Ascending aorta (tissue), 2 donors: ENCODE measurements at regions of chr1 and their contacts with region 1.

Region 1: GRCh38 chr1:10430216-10431069 is at the start of gene CENPS:
- DNase-seq: peak; percentile 61 to 95
- H3K4me3 ChIP-seq: peak within 1 kb of the TSS; percentile 84 to 97
- H3K27ac ChIP-seq: peak within 1 kb of the TSS; percentile 65 to 71
- H3K4me1 ChIP-seq: peaks cover 5 to 12% of the 10 kb centered on the region in 2 donors
- H3K27me3 ChIP-seq: no peaks in the 10 kb centered on the region
- CTCF ChIP-seq: peak; percentile 96 to 100 (median 97)
- total RNA-seq, gene CENPS: not detected

Region 2: GRCh38 chr1:9874959-9875635 is 555.3 kb before region 1 on chr1:
- intact Hi-C with region 1: loop called (anchors 5 kb)
- DNase-seq: peak; percentile 15 to 79
- H3K4me3 ChIP-seq: peak overlapping the region in 1 of 2 donors; percentile 59
- H3K27ac ChIP-seq: peak overlapping the region; percentile 17 to 67
- H3K4me1 ChIP-seq: peaks cover 5 to 14% of the 10 kb centered on the region in 2 donors
- H3K27me3 ChIP-seq: no peaks in the 10 kb centered on the region
- CTCF ChIP-seq: peak; percentile 85 to 97 (median 96)

Region 3: DNA sequence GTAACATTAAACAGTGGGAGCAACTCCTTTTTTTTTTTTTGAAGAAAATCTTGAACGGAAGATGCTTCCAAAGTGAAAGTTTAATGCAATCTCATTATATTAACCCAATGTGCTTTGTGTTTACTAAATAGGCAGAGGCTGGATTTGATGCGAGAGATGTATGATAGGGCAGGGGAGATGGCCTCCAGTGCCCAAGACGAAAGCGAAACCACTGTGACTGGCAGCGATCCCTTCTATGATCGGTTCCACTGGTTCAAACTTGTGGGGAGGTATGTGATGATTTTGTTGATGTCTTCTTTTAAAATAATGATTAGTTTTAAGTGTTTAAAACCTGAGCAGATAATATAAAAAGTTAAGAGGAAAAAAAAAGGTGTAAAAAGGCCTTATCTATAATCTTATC is 105.8 kb before region 1 on chr1:
- intact Hi-C with region 1: no loop called
- DNase-seq: no peak
- H3K4me3 ChIP-seq: no peak overlapping the region
- H3K27ac ChIP-seq: no peak overlapping the region
- H3K4me1 ChIP-seq: no peaks in the 10 kb centered on the region
- H3K27me3 ChIP-seq: no peaks in the 10 kb centered on the region
- CTCF ChIP-seq: no peak

Region 4: DNA sequence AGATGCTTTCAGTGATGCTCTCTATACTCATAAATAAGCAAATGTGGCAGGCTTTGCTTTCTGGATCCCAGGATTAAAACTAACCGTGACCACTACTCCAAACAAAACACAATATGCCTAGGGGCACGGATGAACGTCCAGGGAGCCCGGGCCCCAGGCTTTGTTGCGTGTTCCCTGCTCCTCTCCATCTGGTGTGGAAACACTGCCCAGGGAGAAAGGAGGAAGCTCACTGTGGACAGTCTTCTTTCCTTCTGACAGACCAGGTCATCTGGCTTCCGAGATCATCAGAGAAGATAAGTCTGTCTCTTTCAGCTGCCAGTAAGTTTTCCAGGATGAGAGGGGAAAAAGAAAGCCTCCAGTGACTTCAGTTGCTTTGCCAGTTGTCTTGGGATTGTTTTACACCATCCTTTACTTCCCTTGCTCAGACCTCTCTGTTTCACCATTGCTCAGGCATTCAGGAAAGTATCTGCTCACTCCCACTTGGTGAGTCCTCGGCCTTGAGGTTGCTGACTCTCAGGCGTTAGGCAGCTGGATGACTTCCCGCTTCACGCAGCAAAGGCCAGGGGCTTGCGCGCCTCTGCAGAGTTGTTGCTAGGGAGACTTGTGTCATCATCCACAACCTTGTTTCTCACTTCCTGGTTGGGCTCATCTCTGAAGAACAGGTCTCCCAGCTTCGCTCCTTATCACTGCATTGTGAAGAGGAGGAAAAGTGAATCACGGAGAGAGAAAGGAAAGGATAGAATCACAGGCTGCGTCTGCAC is 52.2 kb before region 1 on chr1:
- intact Hi-C with region 1: loop called (anchors 1 kb)
- DNase-seq: peak in 1 of 2 donors; percentile 69
- H3K4me3 ChIP-seq: no peak overlapping the region
- H3K27ac ChIP-seq: peak overlapping the region; percentile 73 to 82
- H3K4me1 ChIP-seq: peaks cover 0 to 12% of the 10 kb centered on the region in 2 donors
- H3K27me3 ChIP-seq: no peaks in the 10 kb centered on the region
- CTCF ChIP-seq: no peak

Region 5: DNA sequence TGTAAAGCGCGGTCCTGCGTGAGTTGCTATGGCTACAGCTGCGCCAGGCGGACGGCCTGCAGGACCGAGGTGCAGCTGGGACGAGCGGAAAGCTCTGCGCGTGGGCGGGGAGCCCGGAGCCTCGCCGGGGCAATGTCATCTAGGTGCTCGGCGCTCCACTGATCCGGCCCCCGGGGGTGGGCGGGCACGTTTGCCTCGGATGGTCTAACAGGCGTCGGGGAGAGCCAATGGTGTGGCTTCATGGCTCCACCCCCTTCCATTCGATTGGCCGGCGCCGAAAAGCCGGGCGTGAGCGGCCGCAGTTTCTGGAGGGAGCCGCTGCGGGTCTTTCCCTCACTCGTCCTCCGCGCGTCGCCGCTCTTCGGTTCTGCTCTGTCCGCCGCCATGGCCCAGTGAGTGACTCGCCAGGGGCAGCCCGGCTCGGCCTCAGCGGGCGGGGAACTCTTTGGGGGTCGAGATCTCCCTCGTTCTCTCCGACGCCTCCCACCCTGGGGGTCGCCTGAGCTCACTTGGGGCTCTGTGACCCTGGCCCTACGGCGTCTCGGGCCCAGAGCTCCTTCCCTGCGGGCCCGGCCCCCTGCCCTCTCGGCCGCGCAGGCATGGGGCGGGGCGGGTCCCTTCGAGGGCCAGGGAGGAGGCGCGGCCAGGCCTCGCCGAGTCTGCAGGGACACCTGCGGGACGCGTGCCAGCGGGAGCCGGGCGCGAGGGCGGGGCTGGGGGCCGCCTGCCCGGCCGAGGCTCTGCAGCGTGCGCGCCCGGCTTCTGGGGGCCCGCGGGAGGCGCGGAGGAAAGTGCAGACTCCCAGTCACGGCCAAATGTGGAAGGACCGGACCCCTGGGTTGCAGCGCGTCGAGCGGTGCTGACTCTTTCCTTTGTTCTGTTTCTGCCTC is 31.5 kb before region 1 on chr1 and contains the start of gene PGD:
- intact Hi-C with region 1: loop called (anchors 1 kb)
- DNase-seq: peak; percentile 96 to 99
- H3K4me3 ChIP-seq: peak within 1 kb of the TSS; percentile 84 to 97
- H3K27ac ChIP-seq: peak within 1 kb of the TSS; percentile 87 to 90
- H3K4me1 ChIP-seq: peaks cover 0 to 17% of the 10 kb centered on the region in 2 donors
- H3K27me3 ChIP-seq: no peaks in the 10 kb centered on the region
- CTCF ChIP-seq: no peak
- total RNA-seq, gene PGD: 152 TPM

Region 6: DNA sequence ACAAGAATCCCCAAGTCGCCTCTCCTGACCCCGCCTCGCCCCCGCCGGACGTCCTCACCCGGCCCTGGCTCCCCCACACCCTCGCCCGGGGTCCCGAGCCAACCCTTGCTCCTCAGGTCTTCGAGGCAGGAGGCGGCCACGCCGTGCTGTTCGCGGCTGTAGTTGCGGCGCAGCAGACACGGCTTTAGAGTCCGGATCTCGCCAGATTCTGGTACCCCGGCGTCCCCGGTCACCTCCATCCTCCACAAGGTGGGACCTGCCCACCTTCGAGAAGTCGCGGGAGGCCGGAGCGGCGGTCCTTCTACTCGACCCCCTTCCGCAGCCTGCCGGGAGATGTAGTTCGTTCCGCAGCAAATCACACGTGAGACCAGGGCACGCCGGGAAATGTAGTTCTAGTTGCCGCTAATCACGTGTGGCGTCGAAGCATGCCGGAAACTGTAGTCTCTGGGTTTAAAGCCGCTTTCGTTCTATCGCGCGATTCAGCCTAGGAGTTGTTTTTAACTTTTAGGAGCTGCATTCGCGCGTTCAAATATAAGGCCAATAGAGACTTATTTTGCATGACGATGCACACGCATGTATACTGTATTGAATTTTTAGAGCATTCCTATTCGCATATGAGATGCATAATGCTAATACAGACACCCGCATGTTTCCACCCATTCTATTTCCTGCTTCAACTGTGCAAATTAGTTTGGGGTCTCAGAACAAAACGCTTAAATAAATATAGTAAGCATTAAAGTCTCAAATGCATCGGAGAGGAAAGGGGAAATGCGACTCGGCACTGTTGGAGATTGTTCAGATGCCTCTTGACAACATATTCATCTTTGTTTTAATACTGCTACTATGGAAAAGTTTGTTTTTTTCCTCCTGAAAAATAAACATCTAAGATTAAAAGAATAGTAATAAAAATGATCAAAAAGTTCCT is 42.0 kb after region 1 on chr1 and contains the start of gene DFFA:
- intact Hi-C with region 1: loop called (anchors 1 kb)
- DNase-seq: peak; percentile 74 to 97
- H3K4me3 ChIP-seq: peak within 1 kb of the TSS; percentile 69 to 76
- H3K27ac ChIP-seq: peak within 1 kb of the TSS; percentile 33 to 62
- H3K4me1 ChIP-seq: peaks cover 11 to 22% of the 10 kb centered on the region in 2 donors
- H3K27me3 ChIP-seq: no peaks in the 10 kb centered on the region
- CTCF ChIP-seq: no peak
- total RNA-seq, gene DFFA: 11.8 TPM

Region 7: DNA sequence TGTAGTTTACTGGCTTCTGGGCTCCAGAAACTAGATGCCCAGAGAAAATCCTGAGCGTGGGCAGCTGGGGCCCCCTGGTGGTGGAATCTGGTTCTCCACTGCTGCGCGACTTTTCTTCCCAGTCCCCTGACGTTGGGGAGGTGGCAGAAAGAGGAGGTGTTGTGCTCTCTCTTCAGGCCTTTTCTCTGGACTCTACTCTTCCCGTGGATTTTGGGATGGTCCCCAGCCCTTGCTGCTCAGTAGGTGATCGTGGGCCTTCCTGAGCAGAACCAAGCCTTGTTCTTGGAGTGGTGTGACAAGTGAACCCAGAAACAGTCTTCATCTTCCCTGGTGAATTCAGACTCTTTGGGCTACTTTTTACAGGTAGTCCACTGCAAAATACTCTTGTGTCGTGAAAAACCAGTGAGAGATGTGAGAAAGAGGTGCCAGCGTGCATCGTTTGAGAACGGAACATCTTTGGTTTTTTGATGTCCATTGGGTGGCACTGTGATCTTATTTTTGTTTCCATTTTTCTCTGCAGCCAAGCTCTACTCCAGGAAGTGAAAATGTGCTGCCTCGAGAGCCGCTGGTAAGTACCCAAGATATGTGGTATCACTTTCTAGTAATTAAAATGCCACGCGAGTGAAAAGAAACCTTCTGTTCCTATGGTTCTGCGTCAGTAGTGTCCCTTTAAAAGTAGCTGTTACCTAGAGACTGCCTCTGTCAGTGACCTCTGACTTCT is 64.5 kb after region 1 on chr1:
- intact Hi-C with region 1: loop called (anchors 1 kb)
- DNase-seq: peak in 1 of 2 donors; percentile 84
- H3K4me3 ChIP-seq: peak overlapping the region; percentile 18 to 47
- H3K27ac ChIP-seq: no peak overlapping the region
- H3K4me1 ChIP-seq: peaks cover 3 to 7% of the 10 kb centered on the region in 2 donors
- H3K27me3 ChIP-seq: no peaks in the 10 kb centered on the region
- CTCF ChIP-seq: peak; percentile 85 to 93 (median 90)

Region 8: GRCh38 chr1:10867138-10867721 is 436.8 kb after region 1 on chr1:
- intact Hi-C with region 1: loop called (anchors 2 kb)
- DNase-seq: peak in 1 of 2 donors; percentile 75
- H3K4me3 ChIP-seq: peak overlapping the region; percentile 54 to 72
- H3K27ac ChIP-seq: no peak overlapping the region
- H3K4me1 ChIP-seq: peaks cover 4% of the 10 kb centered on the region in 2 donors
- H3K27me3 ChIP-seq: peaks cover 4% of the 10 kb centered on the region
- CTCF ChIP-seq: peak; percentile 14 to 93 (median 46)